IMR-90 (cell line): ENCODE measurements at regions of chr20 and their contacts with region 1.

Region 1: DNA sequence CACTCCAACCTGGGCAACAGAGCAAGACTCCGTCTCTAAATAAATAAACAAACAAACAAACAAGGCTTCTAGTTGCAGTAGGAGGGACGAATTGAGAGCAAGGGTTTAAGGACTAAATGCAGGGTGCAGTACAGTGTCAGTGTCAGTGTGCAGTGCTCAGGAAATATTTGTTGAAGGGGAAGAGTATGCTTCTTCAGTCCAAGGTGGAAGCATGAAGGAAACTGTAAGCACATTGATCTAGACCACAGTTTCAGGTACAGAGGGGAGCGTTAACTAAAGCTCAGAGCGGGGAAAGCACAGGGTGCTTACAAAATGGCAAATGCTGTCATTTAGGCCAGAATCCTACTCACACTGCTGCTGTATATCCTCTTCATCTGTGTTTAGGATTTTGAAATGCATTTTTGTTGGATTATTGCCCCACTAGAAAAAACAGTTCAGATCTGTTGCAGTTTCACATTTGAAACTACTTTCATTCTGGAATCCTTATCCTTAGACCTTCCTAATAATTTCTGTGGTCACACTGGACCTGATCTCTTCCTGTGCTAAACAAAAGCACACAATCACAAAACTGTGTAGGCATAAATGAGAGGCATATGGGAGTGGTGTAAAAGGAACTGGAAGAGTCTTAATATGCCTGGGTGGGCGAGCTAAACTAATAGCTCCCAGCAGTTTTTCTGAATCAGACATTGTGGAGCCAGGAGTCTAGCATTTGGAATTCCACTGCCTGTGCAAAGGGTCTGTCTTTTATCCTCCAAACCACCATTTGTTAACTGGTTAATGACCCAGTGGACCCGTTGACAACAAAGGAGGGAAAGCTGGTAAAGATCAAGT is 41.4 kb downstream of the CBFA2T2 start:
- DNase-seq: peak; percentile 51
- ATAC-seq: peak; percentile 74
- H3K4me3 ChIP-seq: peak overlapping the region; percentile 26; the same call in 1 of the 2 replicates
- H3K27ac ChIP-seq: peak overlapping the region; percentile 56; the same call in 1 of the 2 replicates
- H3K4me1 ChIP-seq: peaks cover 21% of the 10 kb centered on the region
- H3K27me3 ChIP-seq: no peaks in the 10 kb centered on the region
- CTCF ChIP-seq: no peak
- POLR2A ChIP-seq: no peak
- RAD21 ChIP-seq: no peak

Region 2: GRCh38 chr20:33489495-33490022 is 41.7 kb before region 1 on chr20:
- CTCF ChIA-PET with region 1: no interaction called
- POLR2A ChIA-PET with region 1: no interaction called
- dilution Hi-C with region 1: no loop called
- in situ Hi-C with region 1: no loop called
- intact Hi-C with region 1: loop called (anchors 5 kb)
- DNase-seq: peak; percentile 95
- ATAC-seq: peak; percentile 99
- H3K4me3 ChIP-seq: peak overlapping the region; percentile 61
- H3K27ac ChIP-seq: peak overlapping the region; percentile 84
- H3K4me1 ChIP-seq: no peaks in the 10 kb centered on the region
- H3K27me3 ChIP-seq: no peaks in the 10 kb centered on the region
- CTCF ChIP-seq: no peak
- POLR2A ChIP-seq: peak; percentile 94
- RAD21 ChIP-seq: no peak

Region 3: GRCh38 chr20:33515569-33516216 is 15.6 kb before region 1 on chr20:
- CTCF ChIA-PET with region 1: no interaction called
- POLR2A ChIA-PET with region 1: no interaction called
- dilution Hi-C with region 1: no loop called
- in situ Hi-C with region 1: no loop called
- intact Hi-C with region 1: no loop called
- DNase-seq: no peak
- ATAC-seq: no peak
- H3K4me3 ChIP-seq: no peak overlapping the region
- H3K27ac ChIP-seq: no peak overlapping the region
- H3K4me1 ChIP-seq: peaks cover 2% of the 10 kb centered on the region; the same call in 1 of the 2 replicates
- H3K27me3 ChIP-seq: no peaks in the 10 kb centered on the region
- CTCF ChIP-seq: peak; percentile 32; the same call in 1 of the 2 replicates
- POLR2A ChIP-seq: no peak
- RAD21 ChIP-seq: 0 out of 2 replicates have a peak, but pooled peaks have one; percentile 13

Region 4: DNA sequence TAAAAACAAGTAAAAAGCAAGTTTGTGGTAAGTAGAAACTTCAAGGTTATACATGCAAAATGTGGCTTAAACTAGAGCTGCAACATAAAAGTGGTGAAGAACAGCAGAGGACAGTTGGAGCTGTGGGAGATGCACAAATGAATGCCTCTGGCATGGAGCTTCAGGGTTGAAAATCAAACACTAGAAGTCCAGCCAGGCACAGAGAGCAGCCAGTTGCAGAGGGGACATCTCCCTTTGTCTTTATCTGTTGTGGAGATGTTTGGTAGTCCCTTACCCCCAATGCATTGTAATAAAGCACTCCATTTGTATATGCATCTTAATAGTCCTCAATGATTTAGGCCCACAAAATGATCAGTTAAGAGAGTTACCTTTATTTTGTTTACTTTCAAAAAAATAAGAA is 57.8 kb after region 1 on chr20:
- CTCF ChIA-PET with region 1: no interaction called
- POLR2A ChIA-PET with region 1: no interaction called
- dilution Hi-C with region 1: no loop called
- in situ Hi-C with region 1: no loop called
- intact Hi-C with region 1: no loop called
- DNase-seq: no peak
- ATAC-seq: no peak
- H3K4me3 ChIP-seq: no peak overlapping the region
- H3K27ac ChIP-seq: no peak overlapping the region
- H3K4me1 ChIP-seq: no peaks in the 10 kb centered on the region
- H3K27me3 ChIP-seq: no peaks in the 10 kb centered on the region
- CTCF ChIP-seq: no peak
- POLR2A ChIP-seq: no peak
- RAD21 ChIP-seq: no peak

Region 5: DNA sequence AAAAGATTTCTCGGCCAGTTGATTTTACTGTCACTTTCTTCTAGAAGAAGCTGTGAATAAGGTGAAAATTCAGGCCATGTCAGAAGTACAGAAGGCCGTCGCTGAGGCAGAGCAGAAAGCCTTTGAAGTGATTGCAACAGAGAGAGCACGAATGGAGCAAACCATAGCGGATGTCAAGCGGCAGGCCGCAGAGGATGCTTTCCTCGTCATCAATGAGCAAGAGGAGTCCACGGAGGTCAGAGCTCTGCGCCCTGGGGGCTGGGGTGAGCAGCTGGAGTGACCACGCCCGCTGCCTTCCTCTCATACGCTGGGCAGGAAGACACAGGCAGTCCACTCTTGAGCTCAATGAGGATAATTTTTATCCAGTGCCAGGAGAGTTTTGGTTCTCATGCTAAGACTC is 109.0 kb after region 1 on chr20:
- CTCF ChIA-PET with region 1: no interaction called
- POLR2A ChIA-PET with region 1: no interaction called
- dilution Hi-C with region 1: no loop called
- in situ Hi-C with region 1: no loop called
- intact Hi-C with region 1: no loop called
- DNase-seq: no peak
- ATAC-seq: no peak
- H3K4me3 ChIP-seq: no peak overlapping the region
- H3K27ac ChIP-seq: no peak overlapping the region
- H3K4me1 ChIP-seq: no peaks in the 10 kb centered on the region; the same call in 1 of the 2 replicates
- H3K27me3 ChIP-seq: no peaks in the 10 kb centered on the region
- CTCF ChIP-seq: no peak
- POLR2A ChIP-seq: no peak
- RAD21 ChIP-seq: no peak